T-cell (primary cell): ENCODE measurements at regions of chr2 and their contacts with region 1.

Region 1: GRCh38 chr2:176140513-176141317 is 10.6 kb upstream of the HOXD4 start:
- DNase-seq: peak; percentile 17 to 80 (median 57)
- ATAC-seq: peak; percentile 76 to 94 (median 79)
- H3K4me3 ChIP-seq: peak overlapping the region; percentile 14 to 42
- H3K4me3 Mint-ChIP-seq: peak overlapping the region in 2 of 3 donors; percentile 29 to 60
- H3K27ac ChIP-seq: no peak overlapping the region
- H3K27ac Mint-ChIP-seq: no peak overlapping the region
- H3K4me1 ChIP-seq: peaks cover 5 to 36% of the 10 kb centered on the region in 2 experiments
- H3K4me1 Mint-ChIP-seq: peaks cover 25 to 35% (median 33%) of the 10 kb centered on the region in 3 donors
- H3K27me3 ChIP-seq: peaks cover 38 to 80% of the 10 kb centered on the region in 2 experiments
- H3K27me3 Mint-ChIP-seq: peaks cover 78 to 92% of the 10 kb centered on the region in 2 donors

Region 2: GRCh38 chr2:175837046-175837445 is 303.7 kb before region 1 on chr2:
- CTCF ChIA-PET with region 1: no interaction called
- POLR2A ChIA-PET with region 1: no interaction called
- DNase-seq: no peak
- ATAC-seq: no peak
- H3K4me3 ChIP-seq: no peak overlapping the region
- H3K4me3 Mint-ChIP-seq: no peak overlapping the region
- H3K27ac ChIP-seq: no peak overlapping the region
- H3K27ac Mint-ChIP-seq: no peak overlapping the region
- H3K4me1 ChIP-seq: no peaks in the 10 kb centered on the region
- H3K4me1 Mint-ChIP-seq: no peaks in the 10 kb centered on the region
- H3K27me3 ChIP-seq: no peaks in the 10 kb centered on the region
- H3K27me3 Mint-ChIP-seq: peaks cover 13 to 30% of the 10 kb centered on the region in 2 donors

Region 3: GRCh38 chr2:176091329-176092258 is 49.1 kb before region 1 on chr2:
- CTCF ChIA-PET with region 1: no interaction called
- POLR2A ChIA-PET with region 1: no interaction called
- DNase-seq: peak in 2 of 35 experiments; percentile 9 to 12
- ATAC-seq: no peak
- H3K4me3 ChIP-seq: no peak overlapping the region
- H3K4me3 Mint-ChIP-seq: peak overlapping the region; percentile 11 to 68 (median 14)
- H3K27ac ChIP-seq: no peak overlapping the region
- H3K27ac Mint-ChIP-seq: peak overlapping the region in 1 of 2 donors; percentile 2
- H3K4me1 ChIP-seq: peaks cover 0 to 23% of the 10 kb centered on the region in 2 experiments
- H3K4me1 Mint-ChIP-seq: peaks cover 26 to 28% (median 26%) of the 10 kb centered on the region in 3 donors
- H3K27me3 ChIP-seq: peaks cover 43 to 66% of the 10 kb centered on the region in 2 experiments
- H3K27me3 Mint-ChIP-seq: peaks cover 84 to 92% of the 10 kb centered on the region in 2 donors

Region 4: GRCh38 chr2:176118601-176119339 is 21.9 kb before region 1 on chr2:
- CTCF ChIA-PET with region 1: no interaction called
- POLR2A ChIA-PET with region 1: no interaction called
- DNase-seq: peak in 1 of 35 experiments; percentile 41
- ATAC-seq: no peak
- H3K4me3 ChIP-seq: no peak overlapping the region
- H3K4me3 Mint-ChIP-seq: no peak overlapping the region
- H3K27ac ChIP-seq: no peak overlapping the region
- H3K27ac Mint-ChIP-seq: no peak overlapping the region
- H3K4me1 ChIP-seq: peaks cover 0 to 26% of the 10 kb centered on the region in 2 experiments
- H3K4me1 Mint-ChIP-seq: peaks cover 7 to 11% (median 8%) of the 10 kb centered on the region in 3 donors
- H3K27me3 ChIP-seq: peaks cover 39 to 89% of the 10 kb centered on the region in 2 experiments
- H3K27me3 Mint-ChIP-seq: peaks cover 68 to 80% of the 10 kb centered on the region in 2 donors

Region 5: DNA sequence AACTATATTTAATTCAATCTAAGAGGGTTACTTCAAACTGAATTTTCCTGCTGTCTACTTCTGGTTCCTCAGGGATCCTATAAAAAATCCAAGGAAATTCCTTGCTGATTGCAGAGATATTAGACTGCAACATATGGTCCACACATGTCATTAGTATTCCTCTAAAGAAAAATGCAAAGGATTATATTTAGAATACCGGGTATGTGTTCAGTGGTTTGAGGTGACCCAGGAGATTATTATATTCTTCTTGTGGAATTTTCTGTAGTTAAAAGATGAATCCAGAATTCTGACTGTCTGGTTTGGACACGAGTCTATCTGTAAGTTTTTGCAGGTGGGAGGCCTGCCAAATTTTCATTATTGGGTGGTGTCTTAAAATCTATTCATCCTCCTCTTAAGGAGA is 66.0 kb after region 1 on chr2:
- CTCF ChIA-PET with region 1: interaction called in 1 of 2 experiments, 10 read pairs
- POLR2A ChIA-PET with region 1: no interaction called
- DNase-seq: no peak
- ATAC-seq: no peak
- H3K4me3 ChIP-seq: no peak overlapping the region
- H3K4me3 Mint-ChIP-seq: no peak overlapping the region
- H3K27ac ChIP-seq: no peak overlapping the region
- H3K27ac Mint-ChIP-seq: no peak overlapping the region
- H3K4me1 ChIP-seq: no peaks in the 10 kb centered on the region
- H3K4me1 Mint-ChIP-seq: no peaks in the 10 kb centered on the region
- H3K27me3 ChIP-seq: peaks cover 0 to 20% of the 10 kb centered on the region in 2 experiments
- H3K27me3 Mint-ChIP-seq: peaks cover 39 to 43% of the 10 kb centered on the region in 2 donors

Region 6: DNA sequence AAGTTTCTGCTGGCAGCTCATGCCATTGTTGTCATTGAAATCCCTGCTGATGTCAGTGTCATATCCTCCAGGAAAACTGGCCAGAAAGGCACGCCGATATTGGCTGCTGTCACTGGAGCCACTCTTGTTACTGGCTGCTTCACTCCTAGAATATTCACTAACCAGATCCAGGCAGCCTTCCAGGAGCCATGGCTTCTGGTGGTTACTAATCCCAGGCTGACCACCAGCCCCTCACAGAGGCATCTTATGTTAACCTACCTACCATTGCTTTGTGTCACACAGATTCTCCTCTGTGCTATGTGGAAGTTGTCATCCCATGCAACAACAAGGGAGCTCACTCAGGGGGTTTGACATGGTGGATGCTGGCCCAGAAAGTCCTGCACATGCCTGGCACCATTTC is 101.6 kb after region 1 on chr2:
- CTCF ChIA-PET with region 1: no interaction called
- POLR2A ChIA-PET with region 1: no interaction called
- DNase-seq: no peak
- ATAC-seq: no peak
- H3K4me3 ChIP-seq: no peak overlapping the region
- H3K4me3 Mint-ChIP-seq: no peak overlapping the region
- H3K27ac ChIP-seq: no peak overlapping the region
- H3K27ac Mint-ChIP-seq: no peak overlapping the region
- H3K4me1 ChIP-seq: no peaks in the 10 kb centered on the region
- H3K4me1 Mint-ChIP-seq: no peaks in the 10 kb centered on the region
- H3K27me3 ChIP-seq: peaks cover 4 to 21% of the 10 kb centered on the region in 2 experiments
- H3K27me3 Mint-ChIP-seq: peaks cover 35 to 38% of the 10 kb centered on the region in 2 donors

Region 7: DNA sequence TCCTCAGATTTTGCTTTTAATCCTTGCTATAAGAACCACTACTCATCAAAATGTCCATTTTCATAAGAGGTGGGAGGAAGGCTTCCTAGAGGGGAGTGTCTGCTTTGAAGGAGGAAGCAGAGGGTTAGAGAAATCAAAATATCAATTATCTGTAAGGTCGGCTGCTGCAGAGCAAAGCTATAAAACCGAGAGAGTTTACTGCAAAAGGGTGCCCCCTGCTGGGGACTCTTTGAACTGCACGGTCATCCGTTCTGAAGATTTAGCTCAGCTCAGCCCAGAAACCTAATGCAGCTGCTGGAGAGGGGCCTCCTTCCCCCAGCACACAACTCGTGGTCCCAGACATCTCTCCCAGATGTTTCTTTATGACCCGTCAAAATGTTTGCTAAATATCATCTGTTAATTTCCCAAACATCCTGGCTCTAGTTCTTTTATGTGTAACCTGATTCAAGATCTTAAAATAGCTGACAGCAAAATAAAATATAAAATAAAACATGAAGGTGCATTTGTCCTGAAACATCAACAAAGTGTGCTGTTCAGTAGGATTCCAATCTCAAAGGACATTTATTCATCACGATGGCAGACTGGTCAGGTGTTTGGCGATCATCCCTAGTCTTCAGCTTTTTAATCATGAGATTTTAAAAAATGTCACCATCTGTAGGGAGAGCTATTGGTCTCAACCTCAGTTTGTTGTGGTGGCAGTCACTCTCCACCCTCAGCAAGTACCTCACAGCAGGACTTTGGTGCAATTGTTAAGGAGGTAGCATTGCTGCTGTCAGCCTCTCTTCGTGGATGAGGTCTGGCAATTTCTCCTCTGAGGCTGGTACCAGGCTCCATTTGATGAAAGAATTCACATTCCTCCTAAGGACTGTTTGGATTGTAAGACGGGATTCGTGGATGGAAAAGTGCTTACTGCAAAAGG is 314.4 kb after region 1 on chr2:
- CTCF ChIA-PET with region 1: interaction called, 19 to 31 read pairs
- POLR2A ChIA-PET with region 1: interaction called in 1 of 2 experiments, 7 read pairs
- DNase-seq: peak; percentile 17 to 81 (median 69)
- ATAC-seq: peak in 3 of 4 experiments; percentile 51 to 61 (median 54)
- H3K4me3 ChIP-seq: no peak overlapping the region
- H3K4me3 Mint-ChIP-seq: no peak overlapping the region
- H3K27ac ChIP-seq: no peak overlapping the region
- H3K27ac Mint-ChIP-seq: no peak overlapping the region
- H3K4me1 ChIP-seq: no peaks in the 10 kb centered on the region
- H3K4me1 Mint-ChIP-seq: peaks cover 0 to 2% (median 0%) of the 10 kb centered on the region in 3 donors
- H3K27me3 ChIP-seq: peaks cover 0 to 7% of the 10 kb centered on the region in 2 experiments
- H3K27me3 Mint-ChIP-seq: peaks cover 43 to 46% of the 10 kb centered on the region in 2 donors

Region 8: GRCh38 chr2:176638167-176639015 is 497.7 kb after region 1 on chr2:
- CTCF ChIA-PET with region 1: interaction called, 6 to 10 read pairs
- POLR2A ChIA-PET with region 1: no interaction called
- DNase-seq: peak in 33 of 35 experiments; percentile 12 to 70 (median 45)
- ATAC-seq: peak; percentile 75 to 90 (median 79)
- H3K4me3 ChIP-seq: peak overlapping the region; percentile 42 to 67
- H3K4me3 Mint-ChIP-seq: peak overlapping the region; percentile 53 to 63 (median 57)
- H3K27ac ChIP-seq: no peak overlapping the region
- H3K27ac Mint-ChIP-seq: no peak overlapping the region
- H3K4me1 ChIP-seq: peaks cover 0 to 9% of the 10 kb centered on the region in 2 experiments
- H3K4me1 Mint-ChIP-seq: peaks cover 0 to 9% (median 9%) of the 10 kb centered on the region in 3 donors
- H3K27me3 ChIP-seq: peaks cover 22 to 37% of the 10 kb centered on the region in 2 experiments
- H3K27me3 Mint-ChIP-seq: peaks cover 56 to 68% of the 10 kb centered on the region in 2 donors

Region 9: DNA sequence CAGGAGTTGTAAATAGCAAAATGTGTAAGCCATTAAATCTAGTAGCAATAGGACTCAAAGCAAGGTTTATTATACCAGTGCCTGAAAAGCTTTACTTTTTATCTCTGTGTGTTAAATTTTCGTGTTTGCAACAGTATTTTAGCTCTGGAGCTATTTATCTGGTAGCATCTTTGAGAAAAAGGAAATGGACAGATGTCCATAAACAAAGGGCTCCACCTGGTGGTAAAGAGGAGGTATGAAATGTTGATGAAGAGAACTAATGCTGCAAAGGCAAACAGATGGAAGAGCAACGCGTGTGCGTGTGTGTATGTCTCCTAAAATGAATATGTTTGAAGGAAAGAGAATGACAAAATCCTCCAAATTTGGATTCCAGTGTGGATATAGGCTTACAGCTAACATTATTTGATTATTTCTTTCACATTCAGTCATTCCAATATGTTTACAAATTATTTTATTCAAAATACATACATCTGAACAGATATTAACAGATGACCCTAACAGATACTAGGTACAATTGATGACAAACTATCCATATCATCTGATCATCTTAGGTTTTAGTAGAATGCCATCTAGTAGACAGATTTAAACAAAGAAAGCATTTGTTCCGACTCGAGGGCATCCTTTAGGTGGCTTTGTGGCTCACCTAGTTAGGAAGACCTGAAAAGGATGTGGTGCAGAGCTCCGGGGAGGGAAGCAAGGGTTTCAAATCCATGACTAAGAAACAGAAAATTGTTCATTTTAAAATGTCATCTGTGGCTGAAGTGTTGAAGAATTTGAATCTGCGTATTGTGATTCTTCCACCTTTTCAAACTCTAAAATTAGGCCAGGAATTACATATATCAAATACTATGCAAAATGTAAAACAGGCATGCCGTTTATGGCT is 511.8 kb after region 1 on chr2:
- CTCF ChIA-PET with region 1: interaction called, 3 to 27 read pairs
- POLR2A ChIA-PET with region 1: no interaction called
- DNase-seq: peak in 5 of 35 experiments; percentile 3 to 64 (median 5)
- ATAC-seq: peak in 3 of 4 experiments; percentile 46 to 50 (median 46)
- H3K4me3 ChIP-seq: no peak overlapping the region
- H3K4me3 Mint-ChIP-seq: no peak overlapping the region
- H3K27ac ChIP-seq: no peak overlapping the region
- H3K27ac Mint-ChIP-seq: peak overlapping the region in 1 of 2 donors; percentile 13
- H3K4me1 ChIP-seq: no peaks in the 10 kb centered on the region
- H3K4me1 Mint-ChIP-seq: peaks cover 10 to 14% (median 10%) of the 10 kb centered on the region in 3 donors
- H3K27me3 ChIP-seq: peaks cover 0 to 5% of the 10 kb centered on the region in 2 experiments
- H3K27me3 Mint-ChIP-seq: peaks cover 36 to 54% of the 10 kb centered on the region in 2 donors

Region 10: GRCh38 chr2:177106212-177106611 is 965.5 kb after region 1 on chr2:
- CTCF ChIA-PET with region 1: interaction called in 1 of 2 experiments, 14 read pairs
- POLR2A ChIA-PET with region 1: no interaction called
- DNase-seq: peak in 1 of 35 experiments; percentile 2
- ATAC-seq: no peak
- H3K4me3 ChIP-seq: no peak overlapping the region
- H3K4me3 Mint-ChIP-seq: no peak overlapping the region
- H3K27ac ChIP-seq: no peak overlapping the region
- H3K27ac Mint-ChIP-seq: no peak overlapping the region
- H3K4me1 ChIP-seq: no peaks in the 10 kb centered on the region
- H3K4me1 Mint-ChIP-seq: no peaks in the 10 kb centered on the region
- H3K27me3 ChIP-seq: no peaks in the 10 kb centered on the region
- H3K27me3 Mint-ChIP-seq: peaks cover 18 to 32% of the 10 kb centered on the region in 2 donors

Region 11: GRCh38 chr2:177148477-177149154 is 1007.9 kb after region 1 on chr2:
- CTCF ChIA-PET with region 1: interaction called, 6 to 12 read pairs
- POLR2A ChIA-PET with region 1: no interaction called
- DNase-seq: peak; percentile 37 to 85 (median 64)
- ATAC-seq: peak; percentile 89 to 93 (median 91)
- H3K4me3 ChIP-seq: peak overlapping the region; percentile 47 to 57
- H3K4me3 Mint-ChIP-seq: peak overlapping the region; percentile 81 to 91 (median 84)
- H3K27ac ChIP-seq: no peak overlapping the region
- H3K27ac Mint-ChIP-seq: peak overlapping the region in 1 of 2 donors; percentile 63
- H3K4me1 ChIP-seq: peaks cover 8 to 9% of the 10 kb centered on the region in 2 experiments
- H3K4me1 Mint-ChIP-seq: peaks cover 12 to 17% (median 13%) of the 10 kb centered on the region in 3 donors
- H3K27me3 ChIP-seq: peaks cover 4 to 8% of the 10 kb centered on the region in 2 experiments
- H3K27me3 Mint-ChIP-seq: peaks cover 32 to 34% of the 10 kb centered on the region in 2 donors